ENCODE measurements at regions of chr6 and their contacts with region 1.

Region 1: GRCh38 chr6:123434186-123434585 is 202.6 kb downstream of the TRDN start:
- DNase-seq: no peak
- ATAC-seq: peak in 3 of 4 donors; percentile 51 to 59 (median 55)
- H3K4me3 ChIP-seq: no peak overlapping the region
- H3K27ac ChIP-seq: peak overlapping the region in 4 of 12 donors; percentile 9 to 37 (median 24)
- H3K4me1 ChIP-seq: peaks cover 0 to 8% (median 3%) of the 10 kb centered on the region in 12 donors
- H3K27me3 ChIP-seq: no peaks in the 10 kb centered on the region
- CTCF ChIP-seq: no peak
- POLR2A ChIP-seq: no peak

Region 2: GRCh38 chr6:123127807-123128206 is 306.4 kb before region 1 on chr6:
- intact Hi-C with region 1: no loop called
- DNase-seq: no peak
- ATAC-seq: no peak
- H3K4me3 ChIP-seq: no peak overlapping the region
- H3K27ac ChIP-seq: no peak overlapping the region
- H3K4me1 ChIP-seq: no peaks in the 10 kb centered on the region
- H3K27me3 ChIP-seq: no peaks in the 10 kb centered on the region
- CTCF ChIP-seq: no peak
- POLR2A ChIP-seq: no peak

Region 3: GRCh38 chr6:123402052-123402451 is 32.1 kb before region 1 on chr6:
- intact Hi-C with region 1: no loop called
- DNase-seq: no peak
- ATAC-seq: no peak
- H3K4me3 ChIP-seq: no peak overlapping the region
- H3K27ac ChIP-seq: no peak overlapping the region
- H3K4me1 ChIP-seq: no peaks in the 10 kb centered on the region
- H3K27me3 ChIP-seq: no peaks in the 10 kb centered on the region
- CTCF ChIP-seq: no peak
- POLR2A ChIP-seq: no peak

Region 4: DNA sequence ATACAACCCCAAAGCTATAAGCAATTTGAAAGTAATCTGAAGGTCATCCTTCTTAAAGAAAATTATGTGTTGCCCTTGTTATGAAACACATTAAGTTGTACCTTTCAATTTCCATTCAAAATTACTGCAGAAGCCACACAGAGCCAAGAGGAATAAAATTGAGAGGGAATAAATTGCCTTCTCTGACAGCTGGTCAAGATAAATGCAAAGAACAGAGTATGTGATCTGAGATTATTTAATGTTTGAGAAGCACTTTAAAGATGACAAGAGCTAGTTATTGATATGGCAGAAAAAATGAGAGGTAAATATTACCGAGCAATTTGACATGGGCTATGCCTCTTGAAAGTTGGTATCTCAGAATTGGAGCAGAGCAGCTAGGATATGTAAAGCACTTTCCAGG is 141.0 kb after region 1 on chr6:
- intact Hi-C with region 1: no loop called
- DNase-seq: no peak
- ATAC-seq: no peak
- H3K4me3 ChIP-seq: no peak overlapping the region
- H3K27ac ChIP-seq: no peak overlapping the region
- H3K4me1 ChIP-seq: peaks cover 0 to 15% (median 7%) of the 10 kb centered on the region in 12 donors
- H3K27me3 ChIP-seq: no peaks in the 10 kb centered on the region
- CTCF ChIP-seq: no peak
- POLR2A ChIP-seq: no peak

Region 5: GRCh38 chr6:123629258-123629941 is 195.2 kb after region 1 on chr6:
- intact Hi-C with region 1: loop called in 1 of 10 experiments (anchors 10 kb)
- DNase-seq: no peak
- ATAC-seq: peak in 3 of 4 donors; percentile 38 to 51 (median 38)
- H3K4me3 ChIP-seq: peak overlapping the region in 5 of 12 donors; percentile 3 to 24 (median 9)
- H3K27ac ChIP-seq: peak overlapping the region in 9 of 12 donors; percentile 21 to 62 (median 47)
- H3K4me1 ChIP-seq: peaks cover 0 to 19% (median 0%) of the 10 kb centered on the region in 12 donors
- H3K27me3 ChIP-seq: no peaks in the 10 kb centered on the region
- CTCF ChIP-seq: no peak
- POLR2A ChIP-seq: no peak